GM13976 (cell line): ENCODE measurements at regions of chr12 and their contacts with region 1.

Region 1: GRCh38 chr12:114662512-114663177 is 21.3 kb downstream of the TBX3 start:
- DNase-seq: peak; percentile 63
- CTCF ChIP-seq: peak; percentile 71

Region 2: DNA sequence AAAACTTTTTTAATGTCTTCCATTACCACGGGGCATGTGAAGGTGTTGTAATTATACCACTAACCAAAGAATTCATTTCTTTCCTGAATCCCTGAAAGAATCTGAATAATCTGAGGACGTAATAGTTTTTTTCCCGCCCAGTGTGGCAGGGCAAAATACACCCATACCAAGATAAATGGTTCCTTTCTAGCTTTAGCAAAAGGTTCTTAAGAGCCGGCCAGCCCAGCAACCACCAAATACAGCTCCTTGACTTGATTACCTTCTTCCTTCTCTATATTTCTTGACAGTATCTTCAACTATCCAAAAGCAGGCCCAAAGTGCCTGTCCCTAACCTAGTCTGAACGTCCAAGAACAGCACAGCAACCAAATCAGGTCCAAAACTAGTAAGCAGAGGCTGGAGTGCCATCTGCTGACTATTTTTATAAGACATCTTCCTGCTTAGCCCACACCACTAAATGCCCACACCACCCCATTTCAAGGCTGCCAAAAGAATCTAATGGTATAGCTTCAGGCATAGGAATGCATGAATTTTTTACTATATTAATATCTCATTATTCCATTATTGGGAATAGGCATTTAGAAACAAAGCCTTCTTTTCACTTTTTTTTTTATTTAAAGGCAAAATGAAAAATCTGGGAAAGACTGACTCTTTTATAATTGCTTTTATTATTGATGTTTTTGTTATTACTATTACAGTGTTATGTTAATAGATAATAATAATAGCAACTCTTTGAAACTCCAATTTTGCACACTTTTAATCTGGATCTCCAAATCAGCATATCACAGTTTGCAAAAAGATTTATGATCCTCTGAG is 1090.5 kb after region 1 on chr12:
- in situ Hi-C with region 1: loop called (anchors 10 kb)
- DNase-seq: peak; percentile 18
- CTCF ChIP-seq: peak; percentile 41